ENCODE measurements at regions of chr22 and their contacts with region 1.

Region 1: GRCh38 chr22:37267135-37267587 is 15.1 kb upstream of the CYTH4 start:
- DNase-seq: peak; percentile 88
- ATAC-seq: peak; percentile 76
- H3K4me3 Mint-ChIP-seq: peak overlapping the region; percentile 83
- H3K27ac Mint-ChIP-seq: peak overlapping the region; percentile 95
- H3K4me1 Mint-ChIP-seq: peaks cover 37% of the 10 kb centered on the region
- H3K27me3 Mint-ChIP-seq: peaks cover 5% of the 10 kb centered on the region

Region 2: DNA sequence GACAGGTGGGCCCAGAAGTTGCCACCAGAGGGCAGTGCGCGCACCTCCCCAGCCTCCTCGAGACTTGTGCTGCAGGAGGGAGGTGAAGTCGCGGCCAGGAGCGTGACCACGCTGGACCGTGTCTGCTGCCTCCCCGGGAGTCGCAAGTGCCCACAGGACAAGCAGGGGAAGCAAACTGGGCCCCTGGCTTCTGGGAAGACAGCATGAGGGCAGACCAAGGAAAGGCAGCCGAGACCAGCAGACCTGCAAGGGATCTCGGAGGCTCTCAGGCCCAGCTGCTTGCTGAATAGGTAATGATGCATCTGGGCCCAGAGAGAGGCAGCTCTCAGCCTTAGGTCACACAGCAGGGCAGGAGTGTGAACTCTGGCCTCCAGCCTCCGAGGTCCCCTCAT is 100.5 kb before region 1 on chr22:
- POLR2A ChIA-PET with region 1: no interaction called
- DNase-seq: peak; percentile 87
- ATAC-seq: peak; percentile 49
- H3K4me3 Mint-ChIP-seq: peak overlapping the region; percentile 80
- H3K27ac Mint-ChIP-seq: peak overlapping the region; percentile 89
- H3K4me1 Mint-ChIP-seq: peaks cover 87% of the 10 kb centered on the region
- H3K27me3 Mint-ChIP-seq: no peaks in the 10 kb centered on the region

Region 3: GRCh38 chr22:37290737-37291136 is 23.6 kb after region 1 on chr22:
- POLR2A ChIA-PET with region 1: no interaction called
- DNase-seq: no peak
- ATAC-seq: no peak
- H3K4me3 Mint-ChIP-seq: no peak overlapping the region
- H3K27ac Mint-ChIP-seq: peak overlapping the region; percentile 27
- H3K4me1 Mint-ChIP-seq: peaks cover 65% of the 10 kb centered on the region
- H3K27me3 Mint-ChIP-seq: no peaks in the 10 kb centered on the region

Region 4: DNA sequence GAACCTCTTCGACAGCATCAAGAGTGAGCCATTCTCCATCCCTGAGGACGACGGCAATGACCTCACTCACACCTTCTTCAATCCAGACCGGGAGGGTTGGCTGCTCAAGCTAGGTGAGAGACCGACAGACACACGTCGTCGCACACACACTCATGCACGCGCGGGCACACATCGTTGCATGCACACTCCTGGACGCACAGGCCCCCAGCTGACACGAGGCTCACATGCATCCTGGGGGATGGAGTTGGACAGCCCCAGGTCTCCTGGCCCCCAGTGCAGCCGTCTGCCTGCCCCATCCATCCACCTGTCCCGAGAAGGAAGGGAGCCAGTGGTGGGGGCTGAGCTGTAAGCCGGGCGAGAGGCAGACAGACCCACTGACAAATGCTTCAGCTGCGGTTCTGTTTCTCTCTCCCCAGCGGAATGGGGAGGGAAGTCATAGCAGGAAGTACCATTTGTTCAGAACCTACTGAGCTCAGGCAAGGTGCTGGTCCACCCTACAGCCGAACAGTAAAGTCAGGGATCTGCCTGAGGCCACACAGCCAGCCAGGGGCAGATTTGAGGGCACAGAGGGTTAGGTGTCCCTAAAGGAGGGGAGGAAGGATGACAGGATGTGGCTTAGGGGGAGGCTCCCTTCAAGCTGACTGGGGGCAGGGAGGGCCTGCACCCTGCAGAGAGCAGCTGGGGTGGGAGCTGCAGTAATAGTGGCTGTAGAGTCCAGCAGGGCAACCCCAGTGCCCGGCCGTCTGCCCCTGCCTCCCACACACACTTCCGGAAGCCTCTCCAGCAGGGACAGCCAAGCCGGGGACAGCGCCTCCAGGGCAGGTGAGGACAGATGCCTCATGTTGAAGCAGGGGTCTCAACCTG is 42.3 kb after region 1 on chr22:
- POLR2A ChIA-PET with region 1: interaction called, 21 read pairs
- DNase-seq: peak; percentile 73
- ATAC-seq: peak; percentile 58
- H3K4me3 Mint-ChIP-seq: peak overlapping the region; percentile 83
- H3K27ac Mint-ChIP-seq: peak overlapping the region; percentile 99
- H3K4me1 Mint-ChIP-seq: peaks cover 83% of the 10 kb centered on the region
- H3K27me3 Mint-ChIP-seq: no peaks in the 10 kb centered on the region

Region 5: GRCh38 chr22:37314315-37315074 is 47.3 kb after region 1 on chr22:
- POLR2A ChIA-PET with region 1: interaction called, 21 read pairs
- DNase-seq: no peak
- ATAC-seq: peak; percentile 49
- H3K4me3 Mint-ChIP-seq: peak overlapping the region; percentile 72
- H3K27ac Mint-ChIP-seq: peak overlapping the region; percentile 90
- H3K4me1 Mint-ChIP-seq: peaks cover 46% of the 10 kb centered on the region
- H3K27me3 Mint-ChIP-seq: peaks cover 2% of the 10 kb centered on the region

Measured in activated naive CD8-positive, alpha-beta T cell treated with anti-CD3 and anti-CD28 coated beads, Interleukin-2, amount 10 ng/mL, durations not matched to agents 7 days and 5 days (primary cell).